WTC11 (cell line): ENCODE measurements at regions of chr5 and their contacts with region 1.

Region 1: DNA sequence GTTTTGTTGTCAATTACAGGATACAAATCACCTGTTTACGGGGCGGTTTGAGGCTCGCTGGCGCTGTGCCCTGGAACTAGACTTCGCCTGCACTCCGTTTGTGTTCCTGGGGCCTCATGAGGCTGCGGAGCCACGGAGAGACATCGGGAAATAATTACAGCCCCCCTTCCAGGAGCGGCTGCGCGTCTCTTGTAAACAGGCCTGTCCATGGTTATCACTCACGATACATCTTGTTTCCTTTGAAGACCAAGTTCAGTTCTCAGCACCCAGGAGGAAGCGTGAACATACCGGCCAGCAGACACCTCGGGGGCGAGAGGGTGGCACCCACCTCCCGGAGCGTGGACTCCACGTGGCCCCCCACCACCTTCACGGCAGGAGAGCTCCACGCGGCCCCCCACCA is 297.1 kb upstream of the IRX4 start:
- DNase-seq: no peak
- ATAC-seq: no peak
- H3K4me3 Mint-ChIP-seq: no peak overlapping the region
- H3K27ac Mint-ChIP-seq: no peak overlapping the region
- H3K4me1 Mint-ChIP-seq: 0 out of 2 replicates have a peak, but pooled peaks cover 3% of the 10 kb centered on the region
- H3K27me3 Mint-ChIP-seq: no peaks in the 10 kb centered on the region
- CTCF ChIP-seq: no peak

Region 2: DNA sequence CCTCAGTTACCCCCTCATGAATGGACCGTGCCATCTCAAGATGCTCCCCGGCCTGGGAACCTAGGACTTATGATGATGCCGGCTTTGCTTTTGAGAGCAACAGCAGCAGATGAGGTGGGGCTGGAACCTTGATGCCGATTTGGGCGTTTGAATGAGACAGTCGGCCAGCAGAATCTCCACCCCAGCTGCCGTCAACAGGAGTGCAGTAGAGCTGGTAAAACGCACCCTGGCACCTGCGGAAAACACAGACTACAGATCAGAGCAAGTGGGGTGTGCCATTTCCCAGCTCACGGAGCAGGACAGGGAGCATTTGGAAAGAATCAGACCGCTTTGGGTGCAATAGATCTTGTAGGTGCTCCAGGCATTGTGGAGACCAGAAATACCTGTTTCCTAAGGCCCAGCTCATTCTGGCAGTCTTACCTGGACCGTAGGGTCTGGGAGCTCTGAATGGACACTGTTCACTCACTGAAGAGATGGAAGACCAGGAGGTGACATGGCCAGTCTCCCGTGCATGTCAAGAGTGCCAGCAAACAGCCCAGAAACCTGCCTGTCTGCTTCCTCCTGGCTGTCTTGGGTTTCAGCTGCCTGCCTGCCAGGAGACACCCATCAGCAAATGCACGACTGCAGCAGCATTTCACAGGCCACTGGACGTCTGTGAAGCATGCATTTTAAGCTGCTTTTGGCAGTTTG is 20.5 kb after region 1 on chr5:
- CTCF ChIA-PET with region 1: no interaction called
- POLR2A ChIA-PET with region 1: no interaction called
- DNase-seq: no peak
- ATAC-seq: no peak
- H3K4me3 Mint-ChIP-seq: no peak overlapping the region
- H3K27ac Mint-ChIP-seq: no peak overlapping the region
- H3K4me1 Mint-ChIP-seq: peaks cover 16% of the 10 kb centered on the region
- H3K27me3 Mint-ChIP-seq: no peaks in the 10 kb centered on the region
- CTCF ChIP-seq: no peak

Region 3: GRCh38 chr5:2240118-2240904 is 60.5 kb after region 1 on chr5:
- CTCF ChIA-PET with region 1: no interaction called
- POLR2A ChIA-PET with region 1: interaction called, 11 read pairs
- DNase-seq: no peak
- ATAC-seq: no peak
- H3K4me3 Mint-ChIP-seq: no peak overlapping the region
- H3K27ac Mint-ChIP-seq: no peak overlapping the region
- H3K4me1 Mint-ChIP-seq: no peaks in the 10 kb centered on the region
- H3K27me3 Mint-ChIP-seq: no peaks in the 10 kb centered on the region
- CTCF ChIP-seq: no peak